MCF 10A (cell line): ENCODE measurements at regions of chr13 and their contacts with region 1.

Region 1: GRCh38 chr13:31094331-31095031 is 67.2 kb downstream of the HSPH1 start:
- DNase-seq: no peak
- H3K4me3 Mint-ChIP-seq: no peak overlapping the region
- H3K27ac Mint-ChIP-seq: no peak overlapping the region
- H3K4me1 Mint-ChIP-seq: peaks cover 39% of the 10 kb centered on the region
- H3K27me3 Mint-ChIP-seq: no peaks in the 10 kb centered on the region
- CTCF ChIP-seq: no peak

Region 2: DNA sequence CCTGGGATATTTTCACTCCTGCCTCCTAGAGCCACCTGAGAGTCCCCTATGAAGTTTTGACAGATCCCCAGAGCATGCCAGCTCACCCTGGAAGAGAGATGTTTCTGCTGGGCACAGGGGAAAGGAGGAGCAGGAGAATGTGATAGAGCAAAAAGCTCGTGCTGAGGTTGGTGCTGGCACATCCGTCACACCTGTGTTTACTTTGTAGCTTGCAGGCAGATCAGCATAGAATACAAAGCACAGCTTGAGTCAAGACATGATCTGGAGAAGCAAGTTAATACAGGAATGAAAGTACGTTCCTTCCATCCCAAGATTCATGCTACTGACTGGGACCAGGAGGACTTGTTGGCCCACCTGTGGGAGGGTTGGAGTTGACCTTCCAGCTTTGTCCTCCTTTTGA is 21.1 kb after region 1 on chr13:
- CTCF ChIA-PET with region 1: no interaction called
- POLR2A ChIA-PET with region 1: interaction called, 33 read pairs
- intact Hi-C with region 1: no loop called
- DNase-seq: no peak
- H3K4me3 Mint-ChIP-seq: no peak overlapping the region
- H3K27ac Mint-ChIP-seq: no peak overlapping the region
- H3K4me1 Mint-ChIP-seq: no peaks in the 10 kb centered on the region
- H3K27me3 Mint-ChIP-seq: peaks cover 35% of the 10 kb centered on the region
- CTCF ChIP-seq: no peak

Region 3: GRCh38 chr13:31129419-31129818 is 34.9 kb after region 1 on chr13:
- CTCF ChIA-PET with region 1: no interaction called
- POLR2A ChIA-PET with region 1: interaction called, 11 read pairs
- intact Hi-C with region 1: no loop called
- DNase-seq: no peak
- H3K4me3 Mint-ChIP-seq: no peak overlapping the region
- H3K27ac Mint-ChIP-seq: no peak overlapping the region
- H3K4me1 Mint-ChIP-seq: no peaks in the 10 kb centered on the region
- H3K27me3 Mint-ChIP-seq: peaks cover 5% of the 10 kb centered on the region
- CTCF ChIP-seq: no peak

Region 4: GRCh38 chr13:31138515-31138914 is 44.0 kb after region 1 on chr13:
- CTCF ChIA-PET with region 1: no interaction called
- POLR2A ChIA-PET with region 1: interaction called, 10 read pairs
- intact Hi-C with region 1: no loop called
- DNase-seq: no peak
- H3K4me3 Mint-ChIP-seq: no peak overlapping the region
- H3K27ac Mint-ChIP-seq: no peak overlapping the region
- H3K4me1 Mint-ChIP-seq: peaks cover 5% of the 10 kb centered on the region
- H3K27me3 Mint-ChIP-seq: no peaks in the 10 kb centered on the region
- CTCF ChIP-seq: no peak

Region 5: GRCh38 chr13:31161828-31162590 is 67.5 kb after region 1 on chr13 and contains the start of gene HSPH1:
- CTCF ChIA-PET with region 1: no interaction called
- POLR2A ChIA-PET with region 1: interaction called, 46 read pairs
- intact Hi-C with region 1: no loop called
- DNase-seq: peak; percentile 98
- H3K4me3 Mint-ChIP-seq: peak within 1 kb of the TSS; percentile 97
- H3K27ac Mint-ChIP-seq: peak within 1 kb of the TSS; percentile 97
- H3K4me1 Mint-ChIP-seq: peaks cover 31% of the 10 kb centered on the region
- H3K27me3 Mint-ChIP-seq: no peaks in the 10 kb centered on the region
- CTCF ChIP-seq: no peak
- total RNA-seq, gene HSPH1: 67.8 and 71.8 TPM in 2 replicates